RWPE1 (cell line): ENCODE measurements at regions of chr2 and their contacts with region 1.

Region 1: GRCh38 chr2:43595603-43596412 is at the start of gene THADA:
- DNase-seq: peak; percentile 98
- H3K27ac ChIP-seq: peak within 1 kb of the TSS; percentile 85
- CTCF ChIP-seq: no peak

Region 2: DNA sequence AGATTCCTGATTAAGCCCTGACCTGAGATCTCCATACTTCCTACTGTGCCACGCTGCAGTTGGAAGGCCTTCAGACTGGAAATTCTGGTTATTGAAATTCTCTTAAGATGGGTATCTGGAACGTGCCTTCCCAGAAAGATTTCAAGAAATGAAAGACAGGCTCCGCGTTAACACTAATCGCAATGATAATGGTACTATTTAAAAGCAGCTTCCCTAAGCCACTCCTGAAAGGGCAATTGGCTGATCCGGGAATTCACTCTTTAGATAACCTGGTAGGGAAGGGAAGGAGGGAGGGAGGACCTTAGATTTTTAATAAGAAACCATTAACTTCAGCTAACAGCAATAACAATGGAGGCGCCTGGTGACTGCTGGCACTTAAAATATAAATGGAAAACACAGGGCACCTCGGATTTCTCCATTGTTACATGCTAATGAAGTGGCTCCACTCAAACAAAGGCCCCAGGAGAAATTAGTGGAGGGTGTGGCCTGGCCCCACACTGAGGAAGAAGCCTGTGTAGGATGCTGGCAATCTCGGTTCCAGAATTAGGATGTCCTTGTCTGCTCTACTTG is 1049.9 kb before region 1 on chr2:
- CTCF ChIA-PET with region 1: interaction called, 11 read pairs
- POLR2A ChIA-PET with region 1: no interaction called
- DNase-seq: no peak
- H3K27ac ChIP-seq: no peak overlapping the region
- CTCF ChIP-seq: no peak

Region 3: GRCh38 chr2:43576981-43577892 is 18.6 kb before region 1 on chr2:
- CTCF ChIA-PET with region 1: interaction called, 10 read pairs
- POLR2A ChIA-PET with region 1: no interaction called
- DNase-seq: peak; percentile 61
- H3K27ac ChIP-seq: no peak overlapping the region
- CTCF ChIP-seq: peak; percentile 89